ENCODE measurements at regions of chr17 and their contacts with region 1.

Region 1: DNA sequence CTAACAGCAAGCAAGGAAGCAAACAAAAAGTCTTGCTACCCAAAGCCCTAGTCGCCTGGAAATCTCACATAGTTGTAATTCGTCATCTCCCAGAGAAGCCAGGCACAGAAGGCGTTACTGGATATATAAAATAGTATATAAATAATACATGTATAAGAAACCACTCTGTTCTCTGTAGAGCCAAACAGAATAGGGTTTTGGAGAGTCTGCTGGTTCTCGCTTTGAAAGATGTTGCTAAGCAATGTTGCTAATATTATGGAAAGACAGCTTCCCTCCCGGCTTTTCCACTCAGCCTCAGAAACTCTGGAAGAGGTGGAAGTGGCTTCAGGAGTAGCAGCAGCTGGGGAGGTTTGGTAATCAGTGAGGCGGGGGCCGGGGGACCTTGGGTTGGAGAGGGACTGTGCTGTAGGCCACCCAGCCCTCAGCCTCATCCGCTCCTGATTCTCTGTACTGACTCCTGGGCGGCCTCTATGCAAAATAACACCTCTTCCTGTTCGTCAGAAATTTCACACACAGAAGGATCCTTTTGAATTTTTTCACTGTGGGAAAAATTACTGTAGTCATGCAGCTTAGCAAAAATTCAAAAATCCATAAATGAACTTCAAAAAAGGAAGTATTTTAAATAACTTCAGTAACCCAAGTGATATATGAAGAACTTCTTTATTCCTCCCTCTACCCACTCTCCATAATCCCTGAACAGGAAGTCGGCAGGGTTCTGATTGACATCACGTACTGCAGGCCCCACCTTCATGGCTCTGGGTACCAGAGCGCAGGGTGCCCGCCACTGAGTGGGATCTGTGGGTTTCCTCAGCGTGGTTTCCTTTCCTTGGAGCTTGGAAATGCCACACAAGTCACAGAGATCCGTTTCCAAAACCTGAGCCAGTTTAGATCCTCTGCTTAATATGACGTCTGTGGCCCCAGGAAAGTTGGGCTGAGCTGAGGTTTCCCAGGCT is 51.4 kb downstream of the RAP1GAP2 start:
- DNase-seq: no peak
- ATAC-seq: no peak
- H3K4me3 ChIP-seq: no peak overlapping the region
- H3K27ac ChIP-seq: peak overlapping the region in 1 of 4 donors; percentile 39
- H3K4me1 ChIP-seq: peaks cover 3% of the 10 kb centered on the region
- H3K27me3 ChIP-seq: no peaks in the 10 kb centered on the region
- CTCF ChIP-seq: no peak
- POLR2A ChIP-seq: no peak

Region 2: DNA sequence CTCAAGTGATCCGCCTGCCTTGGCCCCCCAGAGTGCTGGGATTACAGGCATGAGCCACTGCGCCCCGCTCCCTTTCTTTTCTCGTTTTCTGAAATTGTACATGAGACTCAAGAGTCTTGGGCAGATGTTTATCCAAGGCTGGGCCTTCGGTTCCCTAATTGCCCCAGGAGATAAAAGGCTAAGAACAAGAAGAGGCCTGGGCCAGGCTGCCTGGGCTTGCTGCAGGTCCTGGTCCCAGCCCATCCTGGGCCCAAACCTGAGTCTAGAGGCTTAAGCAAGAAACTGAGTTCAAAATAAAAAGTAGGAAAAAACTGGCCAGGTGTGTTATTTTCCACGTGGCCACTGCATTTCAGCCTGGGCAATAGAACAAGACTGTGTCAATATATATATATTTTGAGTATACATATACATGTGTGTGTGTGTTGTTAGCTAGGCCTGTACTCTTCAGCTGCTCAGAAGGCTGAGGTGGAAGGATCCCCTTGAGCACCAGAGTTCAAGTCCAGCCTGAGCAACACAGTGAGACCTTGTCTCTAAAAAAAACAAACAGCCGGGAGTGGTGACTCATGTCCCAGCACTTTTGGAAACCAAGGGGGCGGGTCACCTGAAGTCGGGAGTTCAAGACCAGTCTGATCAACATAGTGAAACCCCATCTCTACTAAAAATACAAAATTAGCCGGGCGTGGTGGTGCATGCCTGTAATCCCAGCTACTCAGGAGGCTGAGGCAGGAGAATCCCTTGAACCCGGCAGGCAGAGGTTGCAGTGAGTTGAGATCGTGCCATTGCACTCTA is 129.3 kb before region 1 on chr17:
- intact Hi-C with region 1: no loop called
- DNase-seq: no peak
- ATAC-seq: no peak
- H3K4me3 ChIP-seq: no peak overlapping the region
- H3K27ac ChIP-seq: no peak overlapping the region
- H3K4me1 ChIP-seq: no peaks in the 10 kb centered on the region
- H3K27me3 ChIP-seq: no peaks in the 10 kb centered on the region
- CTCF ChIP-seq: no peak
- POLR2A ChIP-seq: no peak

Region 3: GRCh38 chr17:2929881-2930533 is 82.3 kb after region 1 on chr17:
- intact Hi-C with region 1: loop called (anchors 5 kb)
- DNase-seq: peak; percentile 65 to 75 (median 67)
- ATAC-seq: peak; percentile 74
- H3K4me3 ChIP-seq: no peak overlapping the region
- H3K27ac ChIP-seq: peak overlapping the region in 2 of 4 donors; percentile 9 to 47
- H3K4me1 ChIP-seq: peaks cover 25% of the 10 kb centered on the region
- H3K27me3 ChIP-seq: no peaks in the 10 kb centered on the region
- CTCF ChIP-seq: peak; percentile 54 to 70 (median 63)
- POLR2A ChIP-seq: no peak

Region 4: DNA sequence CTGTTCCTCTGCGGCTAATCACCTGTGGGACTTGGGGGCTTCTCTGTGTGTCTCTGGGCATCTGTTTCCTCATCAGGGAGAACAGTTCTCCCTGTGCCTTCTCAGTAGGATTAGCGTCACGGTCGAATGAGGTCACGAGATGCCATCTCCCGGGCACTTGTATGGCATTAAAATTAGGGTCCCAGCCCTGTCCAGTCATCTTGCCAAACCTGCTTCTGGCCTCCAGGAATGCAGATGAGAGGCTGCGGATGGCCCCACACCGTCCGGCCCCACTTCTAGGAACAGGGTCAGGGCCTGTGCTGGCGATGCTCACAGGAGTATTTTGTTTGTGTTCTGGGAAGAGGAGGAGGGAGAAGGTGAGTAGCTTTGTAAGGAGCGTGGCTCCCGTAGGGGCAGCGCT is 157.3 kb after region 1 on chr17:
- intact Hi-C with region 1: loop called (anchors 5 kb)
- DNase-seq: peak in 3 of 4 donors; percentile 25 to 42 (median 37)
- ATAC-seq: no peak
- H3K4me3 ChIP-seq: no peak overlapping the region
- H3K27ac ChIP-seq: peak overlapping the region; percentile 95 to 99 (median 97)
- H3K4me1 ChIP-seq: peaks cover 49% of the 10 kb centered on the region
- H3K27me3 ChIP-seq: no peaks in the 10 kb centered on the region
- CTCF ChIP-seq: no peak
- POLR2A ChIP-seq: no peak

Measured in body of pancreas (tissue), 4 donors.